ENCODE measurements at regions of chr2 and their contacts with region 1.

Region 1: GRCh38 chr2:219057709-219058540 is 2.8 kb downstream of the IHH start:
- DNase-seq: peak; percentile 47 to 83
- H3K4me3 ChIP-seq: no peak overlapping the region
- H3K4me1 ChIP-seq: peaks cover 7% of the 10 kb centered on the region
- H3K27me3 ChIP-seq: peaks cover 49% of the 10 kb centered on the region

Region 2: GRCh38 chr2:219155054-219155644 is 97.2 kb after region 1 on chr2:
- in situ Hi-C with region 1: loop called (anchors 10 kb)
- DNase-seq: peak; percentile 69 to 78
- H3K4me3 ChIP-seq: no peak overlapping the region
- H3K4me1 ChIP-seq: peaks cover 12% of the 10 kb centered on the region
- H3K27me3 ChIP-seq: no peaks in the 10 kb centered on the region

Region 3: GRCh38 chr2:219402665-219403515 is 345.0 kb after region 1 on chr2:
- in situ Hi-C with region 1: no loop called
- DNase-seq: peak; percentile 77 to 81
- H3K4me3 ChIP-seq: no peak overlapping the region
- H3K4me1 ChIP-seq: no peaks in the 10 kb centered on the region
- H3K27me3 ChIP-seq: no peaks in the 10 kb centered on the region

Measured in HAP-1 (cell line).